ENCODE measurements at regions of chr2 and their contacts with region 1.

Region 1: GRCh38 chr2:218839888-218840287 is 8.3 kb upstream of the PRKAG3 start:
- DNase-seq: no peak
- ATAC-seq: no peak
- H3K4me3 ChIP-seq: no peak overlapping the region
- H3K27ac ChIP-seq: peak overlapping the region; percentile 41 to 77 (median 71)
- H3K4me1 ChIP-seq: peaks cover 0 to 2% of the 10 kb centered on the region in 2 donors
- H3K27me3 ChIP-seq: no peaks in the 10 kb centered on the region
- CTCF ChIP-seq: no peak
- POLR2A ChIP-seq: no peak

Region 2: GRCh38 chr2:218717262-218717661 is 122.6 kb before region 1 on chr2:
- in situ Hi-C with region 1: loop called in 2 of 4 experiments (anchors 5 kb)
- intact Hi-C with region 1: no loop called
- DNase-seq: no peak
- ATAC-seq: peak; percentile 61 to 85
- H3K4me3 ChIP-seq: no peak overlapping the region
- H3K27ac ChIP-seq: no peak overlapping the region
- H3K4me1 ChIP-seq: peaks cover 0 to under 1% of the 10 kb centered on the region in 2 donors
- H3K27me3 ChIP-seq: no peaks in the 10 kb centered on the region
- CTCF ChIP-seq: no peak
- POLR2A ChIP-seq: no peak

Region 3: GRCh38 chr2:218745559-218746469 is 94.1 kb before region 1 on chr2:
- in situ Hi-C with region 1: no loop called
- intact Hi-C with region 1: no loop called
- DNase-seq: no peak
- ATAC-seq: no peak
- H3K4me3 ChIP-seq: no peak overlapping the region
- H3K27ac ChIP-seq: no peak overlapping the region
- H3K4me1 ChIP-seq: no peaks in the 10 kb centered on the region
- H3K27me3 ChIP-seq: no peaks in the 10 kb centered on the region
- CTCF ChIP-seq: no peak
- POLR2A ChIP-seq: no peak

Region 4: GRCh38 chr2:218915021-218915420 is 75.1 kb after region 1 on chr2:
- in situ Hi-C with region 1: no loop called
- intact Hi-C with region 1: no loop called
- DNase-seq: no peak
- ATAC-seq: no peak
- H3K4me3 ChIP-seq: no peak overlapping the region
- H3K27ac ChIP-seq: no peak overlapping the region
- H3K4me1 ChIP-seq: no peaks in the 10 kb centered on the region
- H3K27me3 ChIP-seq: no peaks in the 10 kb centered on the region
- CTCF ChIP-seq: no peak
- POLR2A ChIP-seq: no peak

Measured in gastrocnemius medialis (tissue), 4 donors.